RWPE1 (cell line): ENCODE measurements at regions of chr2 and their contacts with region 1.

Region 1: GRCh38 chr2:208175069-208175839 is 11.9 kb upstream of the CRYGA start:
- DNase-seq: peak; percentile 78
- H3K27ac ChIP-seq: no peak overlapping the region
- CTCF ChIP-seq: peak; percentile 92

Region 2: GRCh38 chr2:208254871-208255556 is 79.8 kb after region 1 on chr2 and contains the start of gene IDH1:
- CTCF ChIA-PET with region 1: interaction called, 22 read pairs
- POLR2A ChIA-PET with region 1: no interaction called
- DNase-seq: peak; percentile 96
- H3K27ac ChIP-seq: peak within 1 kb of the TSS; percentile 94
- CTCF ChIP-seq: peak; percentile 78